Body of pancreas (tissue), 4 donors: ENCODE measurements at regions of chr1 and their contacts with region 1.

Region 1: DNA sequence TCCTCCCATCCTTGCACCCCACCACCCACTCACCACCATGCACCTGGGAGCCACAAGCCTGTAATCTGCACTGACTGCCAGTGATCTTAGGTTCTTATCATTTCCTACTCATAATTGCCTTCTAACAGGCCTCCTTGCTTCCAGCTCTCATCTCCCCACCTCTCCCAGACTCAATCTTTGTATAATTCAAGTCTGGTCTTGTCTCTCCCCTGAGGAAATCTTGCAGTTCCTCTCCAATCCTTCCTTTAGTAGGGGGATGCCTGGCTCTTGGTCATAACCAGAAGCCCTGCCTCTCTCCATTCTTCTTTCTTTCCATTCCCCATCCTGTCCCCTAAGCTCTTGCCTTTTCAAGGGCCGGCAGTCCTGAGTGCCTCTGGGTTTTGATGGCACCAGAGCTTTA is 27.8 kb downstream of the PIGM start:
- DNase-seq: no peak
- ATAC-seq: no peak
- H3K4me3 ChIP-seq: no peak overlapping the region
- H3K27ac ChIP-seq: no peak overlapping the region
- H3K4me1 ChIP-seq: no peaks in the 10 kb centered on the region
- H3K27me3 ChIP-seq: no peaks in the 10 kb centered on the region
- CTCF ChIP-seq: no peak
- POLR2A ChIP-seq: no peak

Region 2: GRCh38 chr1:159935719-159936272 is 68.2 kb before region 1 on chr1:
- intact Hi-C with region 1: loop called (anchors 2 kb)
- DNase-seq: no peak
- ATAC-seq: no peak
- H3K4me3 ChIP-seq: no peak overlapping the region
- H3K27ac ChIP-seq: no peak overlapping the region
- H3K4me1 ChIP-seq: peaks cover 8% of the 10 kb centered on the region
- H3K27me3 ChIP-seq: no peaks in the 10 kb centered on the region
- CTCF ChIP-seq: no peak
- POLR2A ChIP-seq: no peak

Region 3: DNA sequence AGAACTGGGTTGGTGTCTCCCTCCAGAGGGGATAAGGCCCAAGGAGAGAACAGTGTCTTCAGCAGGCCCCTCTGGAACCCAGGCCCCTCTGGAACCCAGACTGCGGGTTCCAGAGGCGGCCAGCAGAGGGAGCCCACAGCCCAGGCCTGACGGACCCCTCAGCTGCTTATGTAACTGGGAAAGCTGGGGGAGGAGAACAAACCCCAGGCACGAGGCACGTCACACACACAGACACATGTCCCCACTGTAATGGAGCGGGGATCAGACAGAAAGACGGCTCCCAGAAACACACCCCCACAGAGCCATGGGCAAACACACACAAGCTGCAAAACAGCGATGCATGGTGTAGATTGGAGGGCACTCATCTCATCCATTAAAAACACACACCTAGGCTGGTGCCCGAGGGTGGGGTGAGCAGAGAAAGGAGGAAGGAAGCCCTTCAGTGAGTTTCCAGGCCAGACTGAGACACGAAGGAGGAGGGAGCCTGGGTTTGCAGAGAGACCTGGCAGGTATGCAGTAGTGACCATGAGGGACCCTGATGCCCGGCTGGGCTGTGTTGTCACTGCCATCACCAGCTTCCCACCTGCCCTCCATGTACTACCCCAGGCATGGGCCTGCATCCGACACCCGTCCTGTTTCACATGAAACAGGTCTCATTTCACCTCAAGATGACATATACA is 97.2 kb after region 1 on chr1:
- intact Hi-C with region 1: no loop called
- DNase-seq: peak; percentile 80 to 87 (median 86)
- ATAC-seq: peak; percentile 35
- H3K4me3 ChIP-seq: no peak overlapping the region
- H3K27ac ChIP-seq: peak overlapping the region in 3 of 4 donors; percentile 46 to 67 (median 55)
- H3K4me1 ChIP-seq: peaks cover 38% of the 10 kb centered on the region
- H3K27me3 ChIP-seq: no peaks in the 10 kb centered on the region
- CTCF ChIP-seq: peak; percentile 86 to 99 (median 89)
- POLR2A ChIP-seq: peak in 2 of 3 donors; percentile 17 to 22